T-cell (primary cell): ENCODE measurements at regions of chr5 and their contacts with region 1.

Region 1: DNA sequence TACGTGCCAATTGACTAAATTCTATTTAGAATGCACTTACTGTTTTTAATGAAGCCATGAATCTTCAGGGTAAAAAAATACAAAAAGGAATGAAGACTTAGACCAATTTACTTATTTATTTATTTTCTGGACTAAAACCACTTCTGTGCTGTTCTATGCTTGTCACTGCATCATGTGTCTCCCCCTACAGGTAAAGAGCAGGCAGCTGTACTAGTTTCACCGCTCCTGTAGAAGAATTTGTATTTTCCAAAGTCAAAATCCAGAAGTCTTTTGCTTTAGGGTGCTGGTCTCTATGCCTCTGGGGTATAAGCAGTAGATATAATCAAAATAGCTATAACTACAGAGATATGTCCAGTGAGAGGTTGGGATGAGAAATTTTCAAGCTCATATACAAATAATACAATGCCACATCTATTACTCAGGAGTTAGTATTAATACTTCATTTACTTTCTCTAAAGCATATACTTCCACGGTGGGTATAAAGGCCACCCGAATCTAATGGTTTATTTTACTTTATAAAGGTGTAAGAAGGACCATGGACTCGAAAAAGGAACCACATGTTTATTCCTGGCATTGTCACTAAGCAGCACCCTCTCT is 591.5 kb downstream of the RAB3C start:
- DNase-seq: peak in 27 of 35 experiments; percentile 2 to 78 (median 19)
- ATAC-seq: peak; percentile 69 to 86 (median 78)
- H3K4me3 ChIP-seq: no peak overlapping the region
- H3K4me3 Mint-ChIP-seq: no peak overlapping the region
- H3K27ac ChIP-seq: no peak overlapping the region
- H3K27ac Mint-ChIP-seq: no peak overlapping the region
- H3K4me1 ChIP-seq: peaks cover 0 to 2% of the 10 kb centered on the region in 2 experiments
- H3K4me1 Mint-ChIP-seq: peaks cover 5 to 9% (median 8%) of the 10 kb centered on the region in 3 donors
- H3K27me3 ChIP-seq: no peaks in the 10 kb centered on the region
- H3K27me3 Mint-ChIP-seq: no peaks in the 10 kb centered on the region

Region 2: DNA sequence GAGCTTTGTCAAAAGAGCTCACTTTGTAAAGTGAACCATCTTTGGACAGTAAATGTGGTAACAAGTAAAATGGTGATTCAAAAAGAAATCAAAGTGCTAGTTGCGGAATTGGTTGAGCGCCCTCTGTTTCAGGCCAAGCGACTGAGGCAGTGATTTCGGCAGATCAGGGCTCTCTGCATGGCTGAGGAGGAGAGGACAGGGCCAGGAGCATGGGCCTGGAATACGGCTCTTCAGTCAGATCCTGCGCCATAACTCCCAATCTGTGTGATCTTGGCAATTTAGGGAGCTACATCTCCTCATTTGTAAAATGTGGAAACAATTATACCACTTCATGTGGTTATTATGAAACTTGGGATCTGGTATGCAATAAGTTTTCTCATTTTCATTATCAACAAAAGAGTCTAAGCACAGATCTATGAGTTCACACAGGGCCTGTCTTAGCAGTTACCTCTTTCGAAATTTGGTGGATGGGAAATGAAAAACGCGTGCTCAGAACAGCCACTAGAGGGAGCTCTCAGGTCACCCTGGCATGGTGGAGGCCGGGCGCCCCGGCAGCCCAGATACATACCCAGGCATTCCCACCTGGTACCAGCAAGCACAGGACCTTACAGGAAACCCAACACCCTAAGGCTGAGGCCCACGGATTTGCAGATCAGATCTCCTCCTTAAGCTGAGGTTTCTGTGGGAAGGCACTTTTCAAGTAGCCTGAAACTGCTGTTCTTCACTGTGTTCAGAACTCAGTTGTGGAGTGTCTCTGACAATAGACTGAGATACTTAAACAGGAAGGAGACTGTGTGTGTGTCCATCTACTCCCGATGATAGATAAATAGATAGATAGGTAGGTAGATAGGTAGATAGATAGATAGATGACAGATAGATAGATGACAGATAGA is 287.8 kb before region 1 on chr5:
- CTCF ChIA-PET with region 1: interaction called, 25 to 53 read pairs
- POLR2A ChIA-PET with region 1: no interaction called
- DNase-seq: peak; percentile 18 to 81 (median 47)
- ATAC-seq: peak; percentile 75 to 81 (median 80)
- H3K4me3 ChIP-seq: no peak overlapping the region
- H3K4me3 Mint-ChIP-seq: peak overlapping the region in 1 of 3 donors; percentile 51
- H3K27ac ChIP-seq: no peak overlapping the region
- H3K27ac Mint-ChIP-seq: peak overlapping the region in 1 of 2 donors; percentile 68
- H3K4me1 ChIP-seq: peaks cover 5 to 14% of the 10 kb centered on the region in 2 experiments
- H3K4me1 Mint-ChIP-seq: peaks cover 26 to 32% (median 27%) of the 10 kb centered on the region in 3 donors
- H3K27me3 ChIP-seq: peaks cover 0 to 6% of the 10 kb centered on the region in 2 experiments
- H3K27me3 Mint-ChIP-seq: peaks cover 2 to 3% of the 10 kb centered on the region in 2 donors

Region 3: GRCh38 chr5:59039296-59040023 is 134.9 kb before region 1 on chr5:
- CTCF ChIA-PET with region 1: interaction called, 26 to 86 read pairs
- POLR2A ChIA-PET with region 1: interaction called, 3 to 4 read pairs
- DNase-seq: peak; percentile 83 to 94 (median 91)
- ATAC-seq: peak; percentile 82 to 86 (median 84)
- H3K4me3 ChIP-seq: peak overlapping the region; percentile 90 to 98
- H3K4me3 Mint-ChIP-seq: peak overlapping the region; percentile 91 to 98 (median 95)
- H3K27ac ChIP-seq: peak overlapping the region; percentile 87
- H3K27ac Mint-ChIP-seq: peak overlapping the region; percentile 100
- H3K4me1 ChIP-seq: peaks cover 16 to 45% of the 10 kb centered on the region in 2 experiments
- H3K4me1 Mint-ChIP-seq: peaks cover 58 to 67% (median 64%) of the 10 kb centered on the region in 3 donors
- H3K27me3 ChIP-seq: no peaks in the 10 kb centered on the region
- H3K27me3 Mint-ChIP-seq: no peaks in the 10 kb centered on the region

Region 4: DNA sequence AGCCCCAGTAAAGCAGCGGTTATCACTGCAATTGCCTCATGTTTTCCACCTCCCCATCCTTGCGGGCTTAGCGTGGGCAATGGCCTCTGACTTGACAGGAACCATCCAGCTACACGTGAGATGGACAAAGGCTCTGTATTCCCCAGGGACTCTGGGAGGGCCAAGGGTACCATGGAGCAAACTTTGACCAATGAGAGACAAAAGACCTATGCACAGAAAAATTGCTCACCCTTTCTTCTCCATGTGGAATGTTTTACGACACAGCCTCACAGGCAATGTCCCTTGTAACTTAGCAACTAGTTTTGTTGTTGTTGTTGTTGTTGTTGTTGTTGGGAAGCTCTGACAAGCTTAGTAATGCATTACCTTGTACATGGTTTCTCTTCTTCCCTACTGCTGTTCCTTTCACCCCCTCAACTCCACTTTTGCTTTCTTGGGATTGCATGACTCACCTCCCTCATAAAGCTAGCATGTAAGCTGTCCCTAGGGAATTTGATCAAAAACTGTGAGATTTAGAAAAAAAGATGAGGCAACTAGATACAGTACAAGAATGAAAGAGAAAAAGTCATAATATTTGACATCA is 40.6 kb before region 1 on chr5:
- CTCF ChIA-PET with region 1: interaction called, 9 to 16 read pairs
- POLR2A ChIA-PET with region 1: no interaction called
- DNase-seq: no peak
- ATAC-seq: no peak
- H3K4me3 ChIP-seq: no peak overlapping the region
- H3K4me3 Mint-ChIP-seq: no peak overlapping the region
- H3K27ac ChIP-seq: no peak overlapping the region
- H3K27ac Mint-ChIP-seq: peak overlapping the region in 1 of 2 donors; percentile 73
- H3K4me1 ChIP-seq: peaks cover 0 to 16% of the 10 kb centered on the region in 2 experiments
- H3K4me1 Mint-ChIP-seq: peaks cover 32 to 43% (median 34%) of the 10 kb centered on the region in 3 donors
- H3K27me3 ChIP-seq: no peaks in the 10 kb centered on the region
- H3K27me3 Mint-ChIP-seq: no peaks in the 10 kb centered on the region

Region 5: DNA sequence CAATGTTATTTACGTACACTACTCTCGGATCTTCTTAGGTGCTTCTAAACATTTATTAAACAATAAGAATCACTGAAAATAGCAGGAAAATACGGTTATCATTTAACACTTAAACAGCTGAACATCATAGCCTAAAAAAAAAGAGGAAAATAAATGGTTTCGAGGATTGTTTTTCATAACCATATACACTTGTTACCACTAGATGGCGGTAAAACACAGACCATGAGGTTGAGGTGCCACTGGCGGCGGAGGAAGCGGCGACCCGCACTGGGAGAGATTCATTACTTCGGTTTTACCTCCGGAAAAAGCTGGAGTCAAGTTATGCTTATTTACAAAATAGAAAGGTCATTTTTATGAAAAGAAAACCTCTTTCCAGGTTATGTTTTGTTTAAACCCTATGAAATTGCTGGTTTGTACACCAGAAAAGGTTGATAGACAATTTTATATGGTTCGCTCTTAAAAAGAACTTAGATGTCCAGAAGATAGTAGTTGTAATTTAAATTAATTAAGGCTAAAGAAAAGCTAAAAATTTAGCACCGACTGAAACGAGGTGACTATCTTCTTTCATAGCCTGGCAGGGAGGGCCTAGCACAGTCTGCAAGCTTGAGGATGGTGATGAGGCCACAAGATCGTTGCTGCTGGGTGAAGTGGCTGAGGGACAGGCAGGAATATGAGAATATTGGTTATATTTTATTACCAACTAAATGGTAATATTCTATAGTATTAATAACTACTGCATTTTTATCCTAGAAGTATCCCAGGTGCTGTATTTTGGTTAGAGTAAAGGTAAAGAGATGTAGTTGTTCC is 14.3 kb after region 1 on chr5:
- CTCF ChIA-PET with region 1: interaction called, 8 to 11 read pairs
- POLR2A ChIA-PET with region 1: interaction called in 1 of 2 experiments, 3 read pairs
- DNase-seq: peak; percentile 6 to 81 (median 46)
- ATAC-seq: peak; percentile 59 to 73 (median 68)
- H3K4me3 ChIP-seq: peak overlapping the region in 1 of 2 donors; percentile 26
- H3K4me3 Mint-ChIP-seq: peak overlapping the region in 1 of 3 donors; percentile 3
- H3K27ac ChIP-seq: no peak overlapping the region
- H3K27ac Mint-ChIP-seq: peak overlapping the region in 1 of 2 donors; percentile 44
- H3K4me1 ChIP-seq: peaks cover 0 to 2% of the 10 kb centered on the region in 2 experiments
- H3K4me1 Mint-ChIP-seq: peaks cover 4 to 7% (median 6%) of the 10 kb centered on the region in 3 donors
- H3K27me3 ChIP-seq: peaks cover 0 to 9% of the 10 kb centered on the region in 2 experiments
- H3K27me3 Mint-ChIP-seq: peaks cover 11 to 19% of the 10 kb centered on the region in 2 donors